Brain microvascular endothelial cell (primary cell): ENCODE measurements at regions of chr7 and their contacts with region 1.

Region 1: GRCh38 chr7:94289071-94289470 is 105.6 kb upstream of the COL1A2 start:
- DNase-seq: peak; percentile 87
- H3K4me3 ChIP-seq: no peak overlapping the region
- H3K27ac ChIP-seq: no peak overlapping the region
- H3K27me3 ChIP-seq: no peaks in the 10 kb centered on the region
- CTCF ChIP-seq: peak; percentile 100

Region 2: DNA sequence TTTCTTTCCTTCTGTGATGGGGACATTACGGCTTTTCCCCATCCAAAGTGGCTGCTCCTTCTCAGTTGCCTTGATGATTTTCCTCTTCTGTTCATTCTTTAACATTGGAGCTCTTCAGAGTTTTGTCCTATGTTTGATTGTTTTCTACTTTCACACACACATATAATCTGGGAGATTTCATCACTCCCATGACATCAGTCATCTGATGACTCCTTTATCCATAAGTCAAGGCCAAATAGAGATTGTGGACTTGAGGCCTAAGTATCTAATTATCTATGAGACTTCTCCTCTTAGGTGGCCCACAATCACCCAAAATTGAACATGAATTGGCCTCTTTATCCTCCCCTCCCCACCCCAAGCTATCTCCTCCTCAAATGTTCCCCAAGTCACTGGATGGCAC is 100.3 kb after region 1 on chr7:
- in situ Hi-C with region 1: no loop called
- DNase-seq: no peak
- H3K4me3 ChIP-seq: no peak overlapping the region
- H3K27ac ChIP-seq: no peak overlapping the region
- H3K27me3 ChIP-seq: no peaks in the 10 kb centered on the region
- CTCF ChIP-seq: no peak

Region 3: DNA sequence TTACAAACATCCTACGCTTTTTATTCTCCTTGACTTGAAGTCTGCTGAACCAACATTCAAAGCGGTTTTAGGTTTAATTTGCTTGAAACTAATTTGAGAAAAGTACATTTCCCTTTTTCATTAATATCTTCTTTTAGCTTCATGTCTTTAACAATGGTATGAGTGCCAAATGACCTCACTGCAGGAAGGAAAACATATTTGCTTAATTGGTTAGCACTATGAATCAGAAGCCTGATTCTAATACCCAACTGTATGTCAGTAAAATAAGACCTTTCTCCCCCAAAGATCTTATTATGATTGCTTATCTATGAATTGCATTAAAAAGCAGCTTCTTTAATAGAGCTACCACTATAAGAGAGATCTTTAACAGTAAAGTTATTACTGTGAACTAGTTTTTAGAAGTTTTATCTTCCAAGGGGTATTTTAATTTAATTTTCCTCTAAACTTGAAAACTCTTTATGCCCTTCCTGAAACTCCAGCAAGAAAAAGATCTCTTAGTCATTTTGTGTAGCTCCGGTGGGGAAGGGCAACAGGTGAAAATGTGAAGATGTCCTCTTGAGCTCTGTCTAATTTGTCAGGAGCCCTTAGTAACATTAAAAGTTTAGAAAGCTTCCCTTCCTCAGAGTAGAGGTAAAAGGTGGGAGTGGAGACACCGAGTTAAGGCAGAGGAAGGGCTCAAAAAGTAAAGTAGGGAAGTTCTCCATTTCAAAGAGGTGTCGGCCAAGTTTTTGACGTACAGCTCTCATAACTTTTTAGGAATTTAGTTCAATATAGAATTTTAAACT is 111.8 kb after region 1 on chr7:
- in situ Hi-C with region 1: loop called (anchors 10 kb)
- DNase-seq: no peak
- H3K4me3 ChIP-seq: peak overlapping the region; percentile 94
- H3K27ac ChIP-seq: peak overlapping the region; percentile 9
- H3K27me3 ChIP-seq: no peaks in the 10 kb centered on the region
- CTCF ChIP-seq: no peak

Region 4: DNA sequence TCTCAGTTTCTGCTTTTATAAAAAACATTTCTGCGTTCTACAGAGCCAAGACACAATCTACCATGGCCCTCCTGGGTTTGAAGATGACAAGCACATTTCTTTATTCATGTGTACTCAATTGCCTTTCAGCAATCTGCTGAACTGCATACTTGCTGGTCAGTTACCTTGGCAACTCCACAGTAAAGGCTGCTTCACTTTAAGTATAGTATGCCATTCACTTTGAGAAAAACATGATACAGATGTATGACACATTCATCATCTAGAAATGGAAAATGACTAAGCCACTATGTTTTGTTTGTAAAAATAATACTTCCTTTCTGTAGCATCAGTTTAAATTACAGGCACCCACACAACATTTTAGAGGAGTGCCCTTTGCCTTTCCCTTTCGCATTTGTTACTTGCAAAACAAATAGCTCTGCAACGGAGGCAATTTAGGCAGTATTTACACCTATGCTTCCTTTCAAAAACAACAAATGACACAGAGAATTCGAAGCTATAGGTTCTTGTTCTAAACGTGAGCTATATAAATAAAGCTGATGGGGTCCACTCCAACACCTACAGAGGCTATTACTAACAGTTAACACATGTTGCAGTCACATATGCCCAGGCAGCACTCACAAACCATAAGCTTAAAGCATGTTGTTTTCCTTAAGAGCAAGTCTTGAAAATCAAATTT is 343.4 kb after region 1 on chr7:
- in situ Hi-C with region 1: loop called (anchors 25 kb)
- DNase-seq: peak; percentile 95
- H3K4me3 ChIP-seq: no peak overlapping the region
- H3K27ac ChIP-seq: peak overlapping the region; percentile 85
- H3K27me3 ChIP-seq: no peaks in the 10 kb centered on the region
- CTCF ChIP-seq: no peak